BJ (cell line): ENCODE measurements at regions of chr6 and their contacts with region 1.

Region 1: GRCh38 chr6:136873748-136874147 is 48.4 kb upstream of the SLC35D3 start:
- DNase-seq: no peak
- H3K4me3 ChIP-seq: no peak overlapping the region
- H3K27me3 ChIP-seq: no peaks in the 10 kb centered on the region
- CTCF ChIP-seq: no peak

Region 2: DNA sequence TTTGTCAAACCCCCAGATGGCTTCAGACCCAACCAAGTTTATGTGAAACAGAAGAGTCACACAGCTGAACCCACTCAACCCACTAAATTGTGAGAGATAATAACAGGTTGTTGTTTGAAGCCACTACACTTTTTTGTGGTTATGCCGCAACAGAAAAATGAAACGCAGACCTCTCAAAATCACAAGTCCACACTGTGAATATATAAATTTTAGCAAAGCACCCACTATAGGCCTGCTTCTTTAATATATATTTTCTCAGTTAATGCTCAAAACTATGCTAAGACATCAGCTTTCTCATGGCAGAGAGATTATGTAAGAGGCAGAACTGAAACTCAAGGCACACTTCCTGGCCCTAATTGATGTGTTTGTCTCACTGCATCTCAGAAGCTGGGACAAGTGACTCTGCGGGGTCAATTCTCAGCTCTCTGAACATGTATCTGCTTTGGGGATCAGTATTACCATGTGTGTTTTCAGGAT is 109.2 kb before region 1 on chr6:
- CTCF ChIA-PET with region 1: no interaction called
- POLR2A ChIA-PET with region 1: no interaction called
- DNase-seq: no peak
- H3K4me3 ChIP-seq: no peak overlapping the region
- H3K27me3 ChIP-seq: no peaks in the 10 kb centered on the region
- CTCF ChIP-seq: no peak

Region 3: GRCh38 chr6:136927292-136927691 is 53.5 kb after region 1 on chr6:
- CTCF ChIA-PET with region 1: no interaction called
- POLR2A ChIA-PET with region 1: interaction called, 10 read pairs
- DNase-seq: no peak
- H3K4me3 ChIP-seq: no peak overlapping the region
- H3K27me3 ChIP-seq: peaks cover 23% of the 10 kb centered on the region
- CTCF ChIP-seq: peak; percentile 36